Transverse colon (tissue), 4 donors: ENCODE measurements at regions of chr19 and their contacts with region 1.

Region 1: GRCh38 chr19:8654591-8655339 is 24.3 kb downstream of the NFILZ start:
- DNase-seq: peak; percentile 50
- H3K4me3 ChIP-seq: peak overlapping the region in 3 of 4 donors; percentile 13 to 28 (median 18)
- H3K27ac ChIP-seq: no peak overlapping the region
- H3K4me1 ChIP-seq: peaks cover 0 to 9% (median 1%) of the 10 kb centered on the region in 4 donors
- H3K27me3 ChIP-seq: peaks cover 4% of the 10 kb centered on the region
- CTCF ChIP-seq: peak; percentile 95 to 100 (median 99)
- EP300 ChIP-seq: no peak
- POLR2A ChIP-seq: no peak

Region 2: GRCh38 chr19:7069042-7069903 is 1585.5 kb before region 1 on chr19 and contains the start of gene ZNF557:
- in situ Hi-C with region 1: no loop called
- intact Hi-C with region 1: loop called (anchors 10 kb)
- DNase-seq: peak; percentile 100
- H3K4me3 ChIP-seq: peak within 1 kb of the TSS; percentile 52 to 95 (median 82)
- H3K27ac ChIP-seq: peak within 1 kb of the TSS; percentile 85 to 88 (median 86)
- H3K4me1 ChIP-seq: peaks cover 8 to 10% (median 8%) of the 10 kb centered on the region in 4 donors
- H3K27me3 ChIP-seq: no peaks in the 10 kb centered on the region
- CTCF ChIP-seq: no peak
- EP300 ChIP-seq: no peak
- POLR2A ChIP-seq: peak; percentile 71
- total RNA-seq, gene ZNF557: 2.0 to 12.5 (median 6.4) TPM

Region 3: DNA sequence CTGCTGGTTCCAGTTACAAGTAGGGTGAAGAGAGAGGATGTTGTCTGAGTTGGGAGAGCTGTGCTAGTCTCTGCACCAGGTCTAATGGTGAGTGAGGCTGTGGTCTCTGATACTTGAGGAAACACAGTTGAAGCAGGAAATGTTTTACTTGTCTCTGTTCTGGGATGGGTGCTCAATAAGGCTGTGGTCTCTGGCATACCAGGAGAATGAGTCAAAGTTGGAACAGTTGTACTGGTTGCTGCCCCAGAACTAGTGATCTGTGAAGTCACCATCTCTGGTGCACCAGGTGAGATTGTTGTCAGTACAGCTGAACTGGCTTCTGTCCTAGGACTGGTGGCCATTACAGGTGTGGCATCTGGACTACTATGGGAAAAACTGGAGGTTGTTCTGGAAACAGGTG is 280.7 kb after region 1 on chr19:
- in situ Hi-C with region 1: no loop called
- intact Hi-C with region 1: no loop called
- DNase-seq: no peak
- H3K4me3 ChIP-seq: no peak overlapping the region
- H3K27ac ChIP-seq: no peak overlapping the region
- H3K4me1 ChIP-seq: no peaks in the 10 kb centered on the region
- H3K27me3 ChIP-seq: no peaks in the 10 kb centered on the region
- CTCF ChIP-seq: no peak
- EP300 ChIP-seq: no peak
- POLR2A ChIP-seq: no peak

Region 4: DNA sequence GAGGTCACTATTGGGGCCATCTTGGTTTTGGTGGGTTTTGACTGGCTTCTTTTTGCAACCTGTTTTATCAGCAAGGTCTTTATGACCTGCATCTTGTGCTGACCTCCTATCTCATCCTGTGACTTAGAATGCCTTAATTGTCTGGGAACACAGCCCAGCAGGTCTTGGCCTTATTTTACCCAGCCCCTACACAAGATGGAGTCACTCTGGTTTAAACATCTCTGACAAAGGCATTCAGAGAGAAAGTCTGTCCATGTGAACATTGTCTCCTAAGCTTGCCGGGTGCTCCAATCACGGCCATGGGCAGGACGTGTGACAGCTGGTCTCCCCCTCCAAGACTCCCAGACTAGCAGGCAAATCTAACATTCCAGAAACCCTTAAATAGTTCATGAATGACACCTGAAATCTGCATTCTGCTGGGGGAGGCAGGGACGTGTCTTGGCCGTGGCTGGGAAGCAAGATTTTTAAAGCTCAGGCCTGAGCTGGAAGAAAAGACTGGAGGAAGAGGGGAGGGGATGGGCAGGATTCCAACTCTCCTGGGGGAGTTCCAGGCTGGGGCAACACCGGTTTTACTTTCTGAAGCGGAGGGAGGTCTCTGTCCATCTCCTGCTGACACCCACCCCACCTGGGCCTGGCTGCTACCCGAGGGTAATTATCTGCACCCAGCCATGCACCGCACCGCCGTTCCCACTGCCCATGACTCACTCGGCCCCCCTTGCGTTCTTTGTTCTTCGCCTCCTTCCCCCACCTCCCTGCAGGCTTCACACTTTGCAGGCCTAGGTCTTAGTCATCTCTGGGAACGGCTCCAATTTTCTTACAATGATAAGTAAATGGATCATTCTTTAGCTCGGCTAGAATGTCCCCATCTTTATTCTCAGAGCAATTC is 420.5 kb after region 1 on chr19:
- in situ Hi-C with region 1: loop called (anchors 10 to 25 kb)
- intact Hi-C with region 1: loop called (anchors 5 kb)
- DNase-seq: peak; percentile 50
- H3K4me3 ChIP-seq: no peak overlapping the region
- H3K27ac ChIP-seq: peak overlapping the region; percentile 19 to 71 (median 54)
- H3K4me1 ChIP-seq: peaks cover 0 to 11% (median 7%) of the 10 kb centered on the region in 4 donors
- H3K27me3 ChIP-seq: no peaks in the 10 kb centered on the region
- CTCF ChIP-seq: no peak
- EP300 ChIP-seq: no peak
- POLR2A ChIP-seq: no peak